ENCODE measurements at regions of chr3 and their contacts with region 1.

Region 1: GRCh38 chr3:15805756-15806266 is 8.0 kb upstream of the ANKRD28 start:
- DNase-seq: no peak
- ATAC-seq: peak; percentile 76 to 81
- H3K4me3 ChIP-seq: no peak overlapping the region
- H3K27ac ChIP-seq: peak overlapping the region; percentile 56
- H3K4me1 ChIP-seq: peaks cover 38% of the 10 kb centered on the region
- H3K27me3 ChIP-seq: no peaks in the 10 kb centered on the region
- CTCF ChIP-seq: no peak

Region 2: DNA sequence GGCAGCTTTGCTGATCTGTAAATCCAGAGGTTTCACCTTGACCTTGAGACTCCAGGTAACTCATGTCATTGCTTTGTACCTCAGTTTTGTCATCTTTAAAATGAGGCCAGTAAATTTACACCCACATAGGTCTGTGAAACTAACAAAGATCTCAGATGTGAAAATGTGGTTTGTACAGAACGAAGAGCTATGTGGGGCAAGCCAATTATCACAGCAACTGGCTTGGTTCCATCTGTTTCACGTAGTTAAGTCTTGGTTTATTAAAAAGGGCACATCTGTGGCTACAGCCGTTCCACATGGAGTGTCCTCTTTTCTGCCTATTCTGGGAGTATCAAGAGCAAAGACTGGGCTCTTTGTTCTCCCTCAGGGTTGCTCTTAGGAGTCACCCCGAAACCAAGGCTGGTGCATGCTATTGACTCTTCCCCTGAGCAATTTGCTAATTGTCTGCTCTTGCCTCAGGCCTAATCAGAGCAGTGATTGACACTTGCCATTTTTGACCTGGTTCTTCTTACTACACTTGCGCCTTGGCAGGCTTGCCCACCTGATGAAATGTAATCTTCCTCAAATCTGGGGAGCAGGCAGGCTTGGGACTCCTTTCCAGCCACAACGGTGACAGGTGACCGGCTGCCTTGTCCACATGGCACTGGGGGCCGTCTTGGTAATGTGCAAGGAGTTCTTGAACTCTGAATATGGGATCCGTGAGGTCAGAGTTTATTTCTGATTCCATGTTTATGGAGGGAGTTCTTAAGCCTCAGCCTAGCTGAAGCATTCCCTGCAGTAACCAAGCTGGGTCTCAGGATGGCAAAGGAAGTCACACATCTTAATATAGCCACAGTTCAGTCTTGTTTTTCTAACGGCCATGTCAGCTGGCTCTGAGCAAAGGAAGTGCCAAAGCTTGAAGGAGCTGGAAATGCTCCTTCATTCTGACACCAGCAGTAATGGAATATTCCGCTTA is 338.3 kb before region 1 on chr3:
- intact Hi-C with region 1: no loop called
- DNase-seq: no peak
- ATAC-seq: no peak
- H3K4me3 ChIP-seq: no peak overlapping the region
- H3K27ac ChIP-seq: no peak overlapping the region
- H3K4me1 ChIP-seq: no peaks in the 10 kb centered on the region
- H3K27me3 ChIP-seq: no peaks in the 10 kb centered on the region
- CTCF ChIP-seq: no peak

Region 3: GRCh38 chr3:15629860-15630597 is 175.8 kb before region 1 on chr3:
- intact Hi-C with region 1: loop called (anchors 10 kb)
- DNase-seq: no peak
- ATAC-seq: peak; percentile 94 to 96
- H3K4me3 ChIP-seq: peak overlapping the region; percentile 32
- H3K27ac ChIP-seq: no peak overlapping the region
- H3K4me1 ChIP-seq: peaks cover 23% of the 10 kb centered on the region
- H3K27me3 ChIP-seq: no peaks in the 10 kb centered on the region
- CTCF ChIP-seq: peak; percentile 74

Region 4: DNA sequence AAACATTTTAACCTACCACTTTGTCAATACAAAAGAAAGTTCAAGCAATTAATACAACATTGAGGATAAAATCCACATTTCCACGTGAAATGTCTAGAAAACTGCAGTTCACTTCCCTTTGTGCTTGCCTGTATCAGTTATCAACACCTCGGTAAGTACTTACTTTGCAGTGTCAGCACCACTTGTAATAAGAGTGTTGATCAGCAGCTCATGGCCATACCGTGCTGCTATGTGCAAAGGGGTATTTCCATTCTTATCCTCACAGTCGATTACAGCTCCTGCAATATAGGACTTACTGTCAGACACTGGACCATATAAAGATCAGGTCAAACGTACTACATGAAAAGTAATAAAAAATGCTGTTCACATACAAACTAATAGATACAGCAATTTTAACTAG is 92.4 kb before region 1 on chr3:
- intact Hi-C with region 1: no loop called
- DNase-seq: no peak
- ATAC-seq: peak in 1 of 2 donors; percentile 73
- H3K4me3 ChIP-seq: no peak overlapping the region
- H3K27ac ChIP-seq: no peak overlapping the region
- H3K4me1 ChIP-seq: no peaks in the 10 kb centered on the region
- H3K27me3 ChIP-seq: no peaks in the 10 kb centered on the region
- CTCF ChIP-seq: no peak